ENCODE measurements at regions of chr18 and their contacts with region 1.

Region 1: DNA sequence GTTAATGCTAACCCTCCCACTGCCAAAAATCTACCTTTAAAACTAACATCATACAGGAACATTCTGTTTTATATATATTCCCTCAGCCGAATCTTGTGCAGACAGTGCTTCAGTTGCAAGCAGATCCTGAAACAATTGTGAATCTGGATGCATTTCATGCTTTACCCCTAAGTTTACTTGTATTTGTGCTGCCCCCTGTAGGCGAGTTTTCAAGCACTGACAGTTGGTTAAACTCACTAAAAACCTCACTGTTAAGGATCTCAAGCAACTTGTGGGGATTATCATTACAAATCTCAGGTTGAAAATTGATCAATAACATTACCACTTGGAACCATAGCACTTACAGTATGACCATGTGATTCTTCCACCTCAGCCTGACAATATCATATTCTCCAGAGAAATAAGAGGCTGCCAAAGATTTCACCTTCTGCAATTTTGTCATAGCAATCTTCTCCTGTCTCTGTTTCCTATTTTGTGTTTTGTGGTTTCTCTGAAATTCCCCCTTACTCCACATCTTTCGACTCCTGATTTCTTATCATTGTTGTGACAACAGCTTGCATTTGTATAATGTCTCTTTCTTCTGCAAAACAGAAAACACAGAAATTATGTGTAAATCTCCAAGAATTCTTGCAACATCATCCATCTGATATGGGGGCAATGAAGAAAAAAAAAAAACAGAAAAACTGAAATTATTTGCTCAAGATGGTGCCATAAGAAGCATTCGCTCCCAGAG is 354.6 kb upstream of the SETBP1 start:
- DNase-seq: peak; percentile 51
- ATAC-seq: peak; percentile 48
- H3K4me3 ChIP-seq: no peak overlapping the region
- H3K27ac ChIP-seq: no peak overlapping the region
- H3K4me1 ChIP-seq: no peaks in the 10 kb centered on the region
- H3K27me3 ChIP-seq: no peaks in the 10 kb centered on the region
- CTCF ChIP-seq: peak; percentile 65

Region 2: DNA sequence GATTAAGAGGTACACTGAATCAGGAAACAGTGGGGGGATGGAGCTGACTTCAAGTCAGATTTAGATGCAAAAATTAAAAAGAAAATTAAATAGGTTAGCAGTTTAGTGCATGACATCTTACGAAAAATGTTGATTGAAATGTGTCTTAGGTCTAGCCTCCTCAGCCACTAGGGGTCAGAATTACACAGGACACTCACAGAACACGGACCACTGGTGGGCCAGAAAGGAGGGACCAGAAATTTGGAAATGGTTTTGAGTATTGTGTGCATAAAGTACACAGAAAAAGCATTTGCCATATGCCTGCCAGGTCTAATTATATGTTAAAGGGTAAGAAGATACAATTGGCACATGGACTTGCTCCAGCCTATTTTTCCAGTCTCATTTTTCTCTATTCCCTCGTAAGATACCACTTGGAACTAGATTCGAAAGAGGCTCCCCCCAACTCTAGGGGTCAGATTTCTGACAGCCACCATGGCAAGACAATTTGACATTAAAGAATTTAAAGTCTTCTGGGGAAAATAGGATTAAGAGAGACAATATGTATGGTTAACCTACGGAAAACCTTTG is 195.6 kb before region 1 on chr18:
- CTCF ChIA-PET with region 1: no interaction called
- POLR2A ChIA-PET with region 1: no interaction called
- intact Hi-C with region 1: loop called (anchors 1 kb)
- DNase-seq: peak; percentile 49
- ATAC-seq: peak; percentile 65
- H3K4me3 ChIP-seq: no peak overlapping the region
- H3K27ac ChIP-seq: no peak overlapping the region
- H3K4me1 ChIP-seq: 0 out of 2 replicates have a peak, but pooled peaks cover 5% of the 10 kb centered on the region
- H3K27me3 ChIP-seq: no peaks in the 10 kb centered on the region
- CTCF ChIP-seq: peak; percentile 69

Region 3: GRCh38 chr18:44197832-44198611 is 128.0 kb before region 1 on chr18:
- CTCF ChIA-PET with region 1: no interaction called
- POLR2A ChIA-PET with region 1: no interaction called
- intact Hi-C with region 1: loop called (anchors 10 kb)
- DNase-seq: no peak
- ATAC-seq: no peak
- H3K4me3 ChIP-seq: no peak overlapping the region
- H3K27ac ChIP-seq: no peak overlapping the region
- H3K4me1 ChIP-seq: peaks cover 4% of the 10 kb centered on the region; the same call in 1 of the 2 replicates
- H3K27me3 ChIP-seq: no peaks in the 10 kb centered on the region
- CTCF ChIP-seq: no peak

Region 4: DNA sequence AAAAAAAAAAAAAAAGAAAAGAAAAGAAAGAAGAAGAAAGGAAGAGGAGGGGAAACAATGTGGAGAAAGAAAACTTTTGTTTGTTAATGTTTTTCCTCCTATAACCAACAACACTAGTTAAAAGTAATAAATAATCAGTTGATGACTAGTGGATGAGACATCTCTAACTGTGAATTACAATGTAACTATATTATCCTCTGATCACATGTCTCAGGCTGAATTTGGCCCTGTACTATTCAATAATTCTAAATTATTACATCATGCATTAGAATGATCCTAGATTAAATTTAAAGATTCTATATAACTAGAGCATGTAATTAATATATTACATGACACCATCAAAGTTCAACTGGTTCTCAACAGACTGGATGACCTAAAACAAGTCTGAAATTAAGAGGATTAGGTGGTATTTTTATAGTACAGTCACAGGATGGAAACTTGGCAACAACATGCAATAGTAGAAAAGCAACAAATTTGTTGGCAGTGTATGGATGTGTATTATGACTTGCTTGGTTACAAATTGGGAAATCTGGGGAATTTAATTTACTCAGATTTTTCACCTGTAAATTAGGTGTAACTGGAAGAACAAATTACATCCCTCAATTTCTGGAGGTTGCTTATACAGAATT is 85.3 kb after region 1 on chr18:
- CTCF ChIA-PET with region 1: no interaction called
- POLR2A ChIA-PET with region 1: no interaction called
- intact Hi-C with region 1: no loop called
- DNase-seq: no peak
- ATAC-seq: peak; percentile 27; the same call in 1 of the 2 replicates
- H3K4me3 ChIP-seq: no peak overlapping the region
- H3K27ac ChIP-seq: no peak overlapping the region
- H3K4me1 ChIP-seq: no peaks in the 10 kb centered on the region
- H3K27me3 ChIP-seq: no peaks in the 10 kb centered on the region
- CTCF ChIP-seq: no peak